Spleen (tissue), 13 donors: ENCODE measurements at regions of chr7 and their contacts with region 1.

Region 1: DNA sequence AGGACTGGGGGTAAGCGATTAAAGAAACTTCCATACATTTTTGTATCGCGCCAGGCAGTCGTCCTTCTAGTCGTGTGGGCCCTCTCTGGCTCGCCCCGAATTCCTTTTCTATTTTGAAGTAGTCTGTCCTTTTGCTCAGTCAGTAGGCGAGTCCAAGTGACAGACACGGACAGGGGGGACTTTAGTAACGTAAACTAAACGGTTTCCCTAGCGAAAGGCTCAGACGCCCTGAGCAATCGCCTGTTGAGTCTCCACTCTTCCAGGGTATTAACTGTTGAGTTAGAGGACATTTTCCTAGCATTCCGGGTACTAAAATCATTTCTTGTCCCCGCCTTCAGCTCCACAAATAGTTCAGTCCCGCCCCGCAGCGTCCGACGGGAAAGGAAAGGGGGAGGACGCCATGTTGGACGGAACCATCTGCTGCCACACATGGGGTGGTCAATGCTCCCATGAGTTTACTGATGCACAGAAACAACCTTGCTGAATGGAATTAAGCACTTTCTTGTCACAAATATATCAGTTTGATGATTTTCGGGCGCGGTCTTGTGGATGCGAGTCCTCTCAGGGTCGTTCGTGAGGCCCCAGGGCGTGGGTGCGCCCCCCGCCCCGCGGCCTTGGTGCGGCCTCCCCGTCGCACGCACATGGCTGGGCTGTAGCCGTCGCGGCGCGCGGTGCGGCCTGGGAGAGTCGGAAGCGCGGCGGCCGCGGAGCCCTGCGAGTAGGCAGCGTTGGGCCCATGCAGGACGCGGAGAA is at the start of gene EIF3B:
- DNase-seq: peak; percentile 97
- H3K4me3 ChIP-seq: peak within 1 kb of the TSS; percentile 86 to 100 (median 98)
- H3K27ac ChIP-seq: peak within 1 kb of the TSS; percentile 96 to 100 (median 100)
- H3K4me1 ChIP-seq: peaks cover 32 to 56% (median 53%) of the 10 kb centered on the region in 6 donors
- H3K27me3 ChIP-seq: no peaks in the 10 kb centered on the region
- CTCF ChIP-seq: peak in 2 of 11 experiments; percentile 11
- POLR2A ChIP-seq: peak in 2 of 3 donors; percentile 51 to 64
- total RNA-seq, gene EIF3B: 79.6 to 150 (median 116) TPM

Region 2: GRCh38 chr7:1579481-1580421 is 774.6 kb before region 1 on chr7:
- intact Hi-C with region 1: loop called (anchors 5 kb)
- DNase-seq: peak; percentile 92
- H3K4me3 ChIP-seq: no peak overlapping the region
- H3K27ac ChIP-seq: no peak overlapping the region
- H3K4me1 ChIP-seq: peaks cover 0 to 12% (median 10%) of the 10 kb centered on the region in 6 donors
- H3K27me3 ChIP-seq: no peaks in the 10 kb centered on the region
- CTCF ChIP-seq: peak; percentile 57 to 91 (median 83)
- POLR2A ChIP-seq: no peak

Region 3: GRCh38 chr7:1979591-1980560 is 374.5 kb before region 1 on chr7:
- intact Hi-C with region 1: no loop called
- DNase-seq: peak; percentile 93
- H3K4me3 ChIP-seq: peak overlapping the region in 1 of 8 donors; percentile 59
- H3K27ac ChIP-seq: peak overlapping the region in 1 of 8 donors; percentile 56
- H3K4me1 ChIP-seq: peaks cover 0 to 23% (median 9%) of the 10 kb centered on the region in 6 donors
- H3K27me3 ChIP-seq: no peaks in the 10 kb centered on the region
- CTCF ChIP-seq: no peak
- POLR2A ChIP-seq: no peak

Region 4: GRCh38 chr7:2241580-2242540 is 112.5 kb before region 1 on chr7 and contains the starts of genes MRM2 and NUDT1:
- intact Hi-C with region 1: loop called (anchors 5 kb)
- DNase-seq: peak; percentile 94
- H3K4me3 ChIP-seq: peak within 1 kb of the TSS; percentile 72 to 99 (median 97)
- H3K27ac ChIP-seq: peak within 1 kb of the TSS; percentile 11 to 88 (median 79)
- H3K4me1 ChIP-seq: peaks cover 21 to 98% (median 64%) of the 10 kb centered on the region in 6 donors
- H3K27me3 ChIP-seq: no peaks in the 10 kb centered on the region
- CTCF ChIP-seq: no peak
- POLR2A ChIP-seq: peak in 1 of 3 donors; percentile 41
- total RNA-seq, gene MRM2: 19.0 to 24.7 (median 23.3) TPM
- total RNA-seq, gene NUDT1: 13.7 to 29.4 (median 20.4) TPM